Activated T-helper 2 cell treated with anti-CD3 and anti-CD28 coated beads, Interferon-gamma antibody, Interleukin-2, Interleukin-4, amounts not matched to agents 10 μg/mL and 5 μg/mL and 100 μg/mL, durations not matched to agents 14 hours and 24 hours and 36 hours (primary cell): ENCODE measurements at regions of chr1 and their contacts with region 1.

Region 1: GRCh38 chr1:78114034-78114956 is 68.5 kb downstream of the GIPC2 start:
- DNase-seq: peak; percentile 41
- H3K4me3 Mint-ChIP-seq: no peak overlapping the region
- H3K27ac Mint-ChIP-seq: no peak overlapping the region
- H3K4me1 Mint-ChIP-seq: peaks cover 5% of the 10 kb centered on the region
- H3K27me3 Mint-ChIP-seq: peaks cover 2% of the 10 kb centered on the region

Region 2: GRCh38 chr1:77825131-77825709 is 289.1 kb before region 1 on chr1:
- intact Hi-C with region 1: loop called (anchors 2 kb)
- DNase-seq: no peak
- H3K4me3 Mint-ChIP-seq: no peak overlapping the region
- H3K27ac Mint-ChIP-seq: no peak overlapping the region
- H3K4me1 Mint-ChIP-seq: peaks cover 4% of the 10 kb centered on the region
- H3K27me3 Mint-ChIP-seq: no peaks in the 10 kb centered on the region

Region 3: DNA sequence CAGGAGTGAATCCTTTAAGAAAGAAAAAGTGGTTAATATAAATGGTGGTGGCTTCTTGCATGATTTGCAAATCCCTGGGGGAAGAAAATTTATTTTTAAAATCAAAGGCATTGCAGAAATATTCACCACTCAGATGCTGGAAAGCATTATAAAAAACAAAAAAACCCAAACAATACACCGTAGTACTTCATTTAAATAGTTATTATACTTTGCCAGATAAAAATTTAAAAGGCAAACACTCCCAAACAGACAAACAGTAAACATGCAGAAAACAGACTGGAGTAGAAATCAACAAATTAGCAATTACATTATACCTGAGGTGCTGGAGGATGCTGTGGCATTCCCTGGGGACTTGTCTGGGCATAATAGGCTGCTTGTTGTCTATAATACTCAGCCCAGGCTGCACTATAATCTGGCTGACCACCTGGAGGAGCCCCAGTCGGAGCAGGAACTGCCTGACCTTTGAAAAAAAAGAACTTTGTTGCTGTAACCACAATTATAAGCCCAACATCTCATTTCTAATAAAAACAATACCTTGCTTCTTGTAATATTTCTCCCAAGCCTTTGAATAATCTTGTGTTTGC is 165.4 kb before region 1 on chr1:
- intact Hi-C with region 1: loop called (anchors 5 kb)
- DNase-seq: no peak
- H3K4me3 Mint-ChIP-seq: no peak overlapping the region
- H3K27ac Mint-ChIP-seq: no peak overlapping the region
- H3K4me1 Mint-ChIP-seq: peaks cover 22% of the 10 kb centered on the region
- H3K27me3 Mint-ChIP-seq: no peaks in the 10 kb centered on the region

Region 4: GRCh38 chr1:78004719-78005447 is 109.4 kb before region 1 on chr1 and contains the start of gene DNAJB4:
- intact Hi-C with region 1: loop called (anchors 2 kb)
- DNase-seq: peak; percentile 63
- H3K4me3 Mint-ChIP-seq: peak within 1 kb of the TSS; percentile 94
- H3K27ac Mint-ChIP-seq: peak within 1 kb of the TSS; percentile 98
- H3K4me1 Mint-ChIP-seq: peaks cover 33% of the 10 kb centered on the region
- H3K27me3 Mint-ChIP-seq: no peaks in the 10 kb centered on the region
- total RNA-seq, gene DNAJB4: 12.5 and 14.6 TPM in 2 replicates